PC-9 (cell line): ENCODE measurements at regions of chr19 and their contacts with region 1.

Region 1: DNA sequence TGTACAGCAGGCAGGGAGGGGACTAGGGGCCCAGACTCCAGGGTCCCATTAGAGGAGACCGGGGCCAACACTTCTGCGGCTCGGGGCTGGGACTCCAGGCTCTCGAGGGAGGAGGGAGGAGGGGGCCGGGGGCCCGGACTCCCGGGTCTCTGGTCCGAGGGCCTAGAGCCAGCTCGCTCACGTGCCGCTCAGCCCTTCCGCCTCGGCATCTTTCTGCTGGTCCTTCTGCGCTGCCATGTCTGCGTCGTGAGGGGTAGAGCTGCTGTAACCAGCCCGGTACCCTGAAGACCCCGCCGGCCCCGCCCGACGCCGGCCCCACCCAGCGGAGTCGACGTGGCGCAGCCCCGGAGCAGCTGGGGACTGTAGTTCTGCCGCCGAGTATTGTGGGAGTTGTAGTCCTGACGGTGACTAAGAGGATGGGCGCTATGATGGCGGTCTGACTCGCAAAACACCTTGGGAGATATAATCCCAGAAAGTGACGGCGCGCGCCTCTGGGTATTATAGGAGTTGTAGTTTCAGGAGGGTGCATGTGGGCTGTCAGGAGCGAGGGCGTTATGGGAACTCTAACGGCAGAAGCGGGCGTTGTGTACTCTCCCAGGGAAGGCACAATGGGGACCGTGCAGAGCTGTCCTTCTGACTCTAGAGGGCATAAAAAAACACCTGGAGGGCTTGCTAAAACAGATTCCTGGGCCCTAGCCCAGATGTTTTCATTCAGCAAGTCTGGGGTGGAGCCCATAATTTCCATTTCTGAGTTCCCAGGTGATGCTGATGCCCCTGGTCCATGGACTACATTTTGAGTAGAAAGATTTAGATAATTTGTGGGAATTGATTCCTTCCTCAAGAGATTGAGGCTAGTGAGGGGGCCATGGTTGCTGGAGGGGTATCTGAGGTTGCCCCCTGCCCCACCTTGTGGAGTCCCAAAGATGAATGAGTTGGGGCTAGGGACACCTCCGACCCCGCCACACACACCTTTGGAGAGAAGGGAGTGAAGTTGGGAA is at the start of gene RABAC1:
- DNase-seq: peak; percentile 84 to 86
- H3K4me3 ChIP-seq: peak within 1 kb of the TSS; percentile 67
- H3K27ac ChIP-seq: peak within 1 kb of the TSS; percentile 24; the same call in 1 of the 2 replicates
- H3K4me1 ChIP-seq: peaks cover 11% of the 10 kb centered on the region
- H3K27me3 ChIP-seq: no peaks in the 10 kb centered on the region
- CTCF ChIP-seq: 0 out of 2 replicates have a peak, but pooled peaks have one; percentile 32
- total RNA-seq, gene RABAC1: 110 and 188 TPM in 2 replicates

Region 2: GRCh38 chr19:41641879-41642485 is 317.4 kb before region 1 on chr19:
- CTCF ChIA-PET with region 1: no interaction called
- POLR2A ChIA-PET with region 1: no interaction called
- intact Hi-C with region 1: loop called (anchors 10 kb)
- DNase-seq: peak; percentile 50 to 56
- H3K4me3 ChIP-seq: no peak overlapping the region
- H3K27ac ChIP-seq: no peak overlapping the region
- H3K4me1 ChIP-seq: no peaks in the 10 kb centered on the region
- H3K27me3 ChIP-seq: peaks cover 32% of the 10 kb centered on the region
- CTCF ChIP-seq: peak; percentile 96

Region 3: GRCh38 chr19:41785653-41786052 is 173.7 kb before region 1 on chr19:
- CTCF ChIA-PET with region 1: no interaction called
- POLR2A ChIA-PET with region 1: no interaction called
- intact Hi-C with region 1: loop called (anchors 5 kb)
- DNase-seq: peak; percentile 77 to 79
- H3K4me3 ChIP-seq: no peak overlapping the region
- H3K27ac ChIP-seq: peak overlapping the region; percentile 51
- H3K4me1 ChIP-seq: peaks cover 56% of the 10 kb centered on the region
- H3K27me3 ChIP-seq: no peaks in the 10 kb centered on the region
- CTCF ChIP-seq: peak; percentile 92

Region 4: DNA sequence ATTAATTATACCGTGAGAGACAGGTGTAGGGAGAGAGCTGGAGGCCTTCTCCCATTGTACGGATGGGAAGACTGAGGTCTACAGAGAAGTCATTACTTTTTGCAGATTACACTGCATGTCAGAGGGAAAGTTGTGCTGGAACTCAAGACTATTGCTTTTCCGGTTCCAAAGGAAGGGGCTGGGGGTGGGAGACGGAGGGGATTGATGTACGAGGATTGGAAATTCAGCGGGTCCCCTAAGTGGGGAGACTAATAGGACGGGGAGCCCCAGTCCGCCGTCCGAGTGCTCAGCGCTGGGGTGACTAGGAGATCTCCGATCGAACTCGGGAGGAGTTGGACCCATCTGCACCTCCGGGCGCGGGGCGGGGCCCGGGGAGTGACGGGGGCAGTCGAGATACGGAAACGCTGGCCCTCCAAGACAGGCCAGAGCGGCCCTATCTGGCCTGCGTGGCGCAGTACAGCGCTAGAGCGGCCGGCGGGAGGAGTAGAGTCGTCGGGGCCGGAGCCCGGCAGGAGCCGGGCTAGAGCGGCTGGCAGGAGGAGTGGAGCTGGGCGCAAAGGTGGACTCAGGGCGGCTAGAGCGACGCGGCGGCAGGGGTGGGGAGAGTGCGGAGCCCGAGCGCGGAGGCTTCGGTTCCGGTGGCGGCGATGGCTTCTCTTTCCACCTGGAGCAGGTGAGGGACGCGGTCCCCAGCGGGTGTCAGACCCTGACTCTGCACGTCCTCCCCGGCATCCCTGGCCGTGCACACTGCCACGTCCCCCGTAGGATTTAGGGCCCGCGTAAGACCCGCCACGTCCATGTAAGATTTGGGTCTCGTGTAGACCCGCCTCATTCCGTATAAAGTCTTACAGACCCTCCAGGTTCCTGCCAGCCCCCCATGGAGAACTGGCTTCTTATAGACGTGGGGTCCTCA is 75.3 kb before region 1 on chr19:
- CTCF ChIA-PET with region 1: interaction called, 3 read pairs
- POLR2A ChIA-PET with region 1: no interaction called
- intact Hi-C with region 1: loop called (anchors 2 kb)
- DNase-seq: peak; percentile 91 to 96
- H3K4me3 ChIP-seq: peak overlapping the region; percentile 83
- H3K27ac ChIP-seq: no peak overlapping the region
- H3K4me1 ChIP-seq: peaks cover 31% of the 10 kb centered on the region
- H3K27me3 ChIP-seq: no peaks in the 10 kb centered on the region
- CTCF ChIP-seq: no peak

Region 5: DNA sequence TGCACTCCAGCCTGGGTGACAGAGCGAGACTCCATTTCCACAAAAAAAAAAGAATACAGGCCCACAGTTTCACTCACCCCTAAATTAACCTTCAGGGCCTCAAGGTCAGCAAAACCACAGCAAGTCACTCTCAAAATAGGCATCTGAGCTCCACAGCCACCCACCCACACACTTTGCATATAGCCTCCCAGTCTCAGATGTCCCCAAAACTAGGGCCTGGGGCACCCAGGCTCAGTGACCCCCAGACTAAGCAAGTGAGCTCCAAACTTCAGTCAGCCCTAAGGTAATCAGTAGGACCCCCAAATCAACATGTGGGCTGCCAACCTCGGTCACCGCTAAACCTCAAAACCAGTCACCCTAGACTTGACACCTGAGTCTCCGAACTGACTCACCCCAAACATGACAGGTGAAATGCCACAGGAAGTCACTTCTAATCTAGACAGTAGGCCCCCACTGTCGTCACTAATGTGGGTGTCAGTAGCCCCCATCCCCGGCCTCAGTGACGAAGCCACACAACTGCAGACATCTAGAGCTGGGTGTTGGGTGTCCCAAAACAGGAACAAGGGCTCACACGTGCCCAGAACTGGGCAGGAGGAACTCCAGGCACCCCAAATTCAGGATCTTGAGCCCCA is 14.1 kb before region 1 on chr19:
- CTCF ChIA-PET with region 1: no interaction called
- POLR2A ChIA-PET with region 1: no interaction called
- intact Hi-C with region 1: no loop called
- DNase-seq: no peak
- H3K4me3 ChIP-seq: no peak overlapping the region
- H3K27ac ChIP-seq: no peak overlapping the region
- H3K4me1 ChIP-seq: no peaks in the 10 kb centered on the region
- H3K27me3 ChIP-seq: no peaks in the 10 kb centered on the region
- CTCF ChIP-seq: no peak

Region 6: DNA sequence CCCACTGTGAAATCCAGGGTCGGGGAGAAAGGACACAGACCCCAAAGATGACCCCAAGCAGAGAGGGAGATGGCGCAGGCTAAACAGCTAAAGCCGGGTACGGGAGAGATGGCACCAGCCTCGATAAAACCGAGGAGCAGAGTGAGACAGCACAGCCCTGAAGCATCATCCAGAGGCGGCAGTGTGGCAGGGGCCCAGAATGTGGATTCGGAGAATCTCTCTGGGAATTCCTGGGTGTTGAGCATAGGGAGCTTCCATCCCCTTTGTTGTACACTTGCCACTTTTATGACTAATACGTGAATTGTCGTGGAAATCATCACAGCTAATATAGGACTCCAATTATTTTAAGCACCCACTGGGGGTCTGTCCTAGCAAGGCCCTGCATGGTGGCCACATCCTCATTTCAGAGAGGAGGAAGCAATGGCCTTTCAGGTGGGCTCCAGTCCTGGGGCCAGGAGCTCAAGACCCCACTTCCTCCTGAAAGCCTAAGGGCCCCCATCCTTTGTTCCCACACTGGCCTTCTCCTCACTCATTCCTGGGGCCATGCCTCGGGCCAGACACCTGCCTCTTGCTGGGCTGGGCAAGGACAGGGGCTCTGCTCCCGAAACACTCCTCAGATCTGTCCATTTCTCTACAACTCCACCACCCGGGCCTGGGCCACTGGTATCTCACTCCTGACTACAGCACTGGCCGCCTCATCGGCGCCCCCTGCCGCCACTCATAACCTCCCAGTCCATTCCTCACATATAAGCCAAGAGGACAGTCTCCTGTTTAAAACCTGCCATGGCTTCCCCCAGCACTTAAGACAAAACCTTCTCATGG is 64.0 kb after region 1 on chr19:
- CTCF ChIA-PET with region 1: no interaction called
- POLR2A ChIA-PET with region 1: no interaction called
- intact Hi-C with region 1: no loop called
- DNase-seq: peak in 1 of 2 experiments; percentile 18
- H3K4me3 ChIP-seq: no peak overlapping the region
- H3K27ac ChIP-seq: no peak overlapping the region
- H3K4me1 ChIP-seq: no peaks in the 10 kb centered on the region
- H3K27me3 ChIP-seq: peaks cover 20% of the 10 kb centered on the region; the same call in 1 of the 2 replicates
- CTCF ChIP-seq: peak; percentile 60

Region 7: DNA sequence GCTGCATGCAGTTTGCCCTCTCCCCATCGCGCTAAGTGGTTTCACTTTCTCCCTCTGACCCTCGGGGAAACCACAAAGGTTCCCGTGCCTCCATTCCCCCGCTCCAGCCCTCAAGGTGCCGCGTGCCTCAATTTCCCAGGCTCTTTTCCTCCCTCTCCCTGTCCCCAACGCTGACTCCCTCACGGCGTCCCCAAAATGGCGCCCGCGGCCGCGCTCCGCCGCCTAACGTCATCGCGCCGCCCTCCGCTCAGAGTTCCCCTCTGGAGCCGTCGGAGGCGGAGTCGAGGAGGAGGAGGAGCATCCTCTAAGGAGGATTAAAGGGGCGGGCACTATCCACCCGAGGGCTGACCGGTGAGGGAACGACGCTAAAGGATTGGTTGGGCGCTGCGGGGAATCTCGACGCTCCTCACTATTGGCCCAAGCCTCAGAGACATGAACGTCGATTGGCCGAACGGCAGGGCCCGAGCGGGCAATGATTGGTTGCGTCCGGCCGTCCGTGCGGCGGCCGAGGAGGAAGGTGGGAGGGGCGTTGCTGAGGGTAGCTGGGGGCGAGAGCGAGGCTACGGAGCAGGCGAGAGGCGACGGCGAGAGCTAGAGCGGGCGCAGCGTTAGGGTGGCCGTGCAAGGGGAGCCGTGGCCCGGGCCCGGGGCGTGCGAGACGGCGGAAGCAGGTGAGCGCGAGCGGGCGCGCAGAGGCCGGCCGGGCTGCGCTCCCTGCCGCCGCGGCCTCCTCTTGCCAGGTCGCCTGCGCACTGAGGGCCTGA is 116.4 kb after region 1 on chr19 and contains the start of gene ZNF574:
- CTCF ChIA-PET with region 1: no interaction called
- POLR2A ChIA-PET with region 1: interaction called, 8 read pairs
- intact Hi-C with region 1: loop called (anchors 5 kb)
- DNase-seq: peak; percentile 98
- H3K4me3 ChIP-seq: peak within 1 kb of the TSS; percentile 90
- H3K27ac ChIP-seq: peak within 1 kb of the TSS; percentile 90
- H3K4me1 ChIP-seq: peaks cover 25% of the 10 kb centered on the region
- H3K27me3 ChIP-seq: no peaks in the 10 kb centered on the region
- CTCF ChIP-seq: no peak
- total RNA-seq, gene ZNF574: 19.4 and 21.6 TPM in 2 replicates